ENCODE measurements at regions of chr13 and their contacts with region 1.

Region 1: GRCh38 chr13:43905435-43906031 is 25.8 kb downstream of the LACC1 start:
- DNase-seq: peak; percentile 80
- H3K4me3 Mint-ChIP-seq: no peak overlapping the region
- H3K27ac Mint-ChIP-seq: no peak overlapping the region
- H3K4me1 Mint-ChIP-seq: no peaks in the 10 kb centered on the region
- H3K27me3 Mint-ChIP-seq: peaks cover 36% of the 10 kb centered on the region

Region 2: GRCh38 chr13:44050450-44051063 is 145.0 kb after region 1 on chr13:
- intact Hi-C with region 1: loop called (anchors 1 kb)
- DNase-seq: no peak
- H3K4me3 Mint-ChIP-seq: no peak overlapping the region
- H3K27ac Mint-ChIP-seq: no peak overlapping the region
- H3K4me1 Mint-ChIP-seq: peaks cover 3% of the 10 kb centered on the region
- H3K27me3 Mint-ChIP-seq: peaks cover 36% of the 10 kb centered on the region

Region 3: GRCh38 chr13:44470638-44471562 is 565.4 kb after region 1 on chr13:
- intact Hi-C with region 1: loop called (anchors 1 kb)
- DNase-seq: no peak
- H3K4me3 Mint-ChIP-seq: no peak overlapping the region
- H3K27ac Mint-ChIP-seq: no peak overlapping the region
- H3K4me1 Mint-ChIP-seq: no peaks in the 10 kb centered on the region
- H3K27me3 Mint-ChIP-seq: peaks cover 16% of the 10 kb centered on the region

Region 4: GRCh38 chr13:44969551-44970484 is 1064.3 kb after region 1 on chr13:
- intact Hi-C with region 1: loop called (anchors 10 kb)
- DNase-seq: no peak
- H3K4me3 Mint-ChIP-seq: no peak overlapping the region
- H3K27ac Mint-ChIP-seq: no peak overlapping the region
- H3K4me1 Mint-ChIP-seq: peaks cover 2% of the 10 kb centered on the region
- H3K27me3 Mint-ChIP-seq: no peaks in the 10 kb centered on the region

Measured in activated CD4-positive, alpha-beta T cell treated with anti-CD3 and anti-CD28 coated beads, Interleukin-2, amount 10 ng/mL, durations not matched to agents 24 days and 14 days (primary cell).